Cardiac septum (tissue), 1 donor: ENCODE measurements at regions of chr1 and their contacts with region 1.

Region 1: DNA sequence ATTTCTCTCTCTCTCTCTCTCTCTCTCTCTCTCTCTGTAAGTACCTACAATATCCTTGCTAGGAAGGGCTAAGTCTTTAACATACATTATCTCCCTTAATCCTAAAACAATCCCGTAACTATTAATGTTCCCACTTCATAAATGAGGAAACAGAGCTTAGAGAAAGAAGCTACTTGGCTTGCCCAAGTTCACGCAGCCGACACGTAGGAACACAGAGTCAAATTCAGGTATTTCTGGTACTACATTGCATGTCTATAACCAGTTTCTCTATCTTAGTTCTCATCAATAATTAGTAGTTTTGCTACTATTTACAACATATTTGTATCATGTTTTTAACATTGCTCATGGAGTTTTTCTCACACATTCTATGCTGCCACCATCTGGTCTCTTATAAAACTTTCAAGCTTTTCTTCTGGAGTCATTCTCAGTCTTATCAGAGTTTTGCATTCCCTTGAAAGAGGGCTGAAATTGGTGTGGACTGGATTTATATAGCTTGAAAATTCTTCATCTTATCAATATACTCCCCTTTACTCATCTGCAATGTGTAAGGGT is 118.9 kb upstream of the PALMD start:
- DNase-seq: no peak

Region 2: GRCh38 chr1:99180343-99180808 is 346.6 kb before region 1 on chr1:
- intact Hi-C with region 1: loop called (anchors 5 kb)
- DNase-seq: no peak